ENCODE measurements at regions of chr3 and their contacts with region 1.

Region 1: DNA sequence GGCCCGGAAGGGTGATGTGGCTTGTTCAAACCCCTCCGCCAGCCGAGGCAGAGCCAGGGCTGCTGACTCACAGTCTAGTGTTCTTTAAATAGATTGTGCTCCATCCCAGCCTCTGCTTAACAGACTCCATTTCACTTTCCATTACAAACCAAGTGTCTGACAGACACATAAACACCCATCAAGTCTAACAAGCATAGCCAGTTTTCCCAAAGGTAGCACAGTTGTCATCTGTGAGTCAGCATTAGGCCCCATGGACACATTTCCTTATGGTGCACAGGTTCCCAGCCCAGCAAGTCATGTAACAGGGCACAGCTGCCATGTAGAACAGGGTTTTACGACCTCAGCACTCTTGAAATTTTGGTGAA is 109.9 kb upstream of the RAP2B start:
- DNase-seq: peak; percentile 86
- H3K4me3 Mint-ChIP-seq: peak overlapping the region; percentile 63
- H3K27ac Mint-ChIP-seq: peak overlapping the region; percentile 100
- H3K4me1 Mint-ChIP-seq: peaks cover 49% of the 10 kb centered on the region
- H3K27me3 Mint-ChIP-seq: no peaks in the 10 kb centered on the region
- CTCF ChIP-seq: no peak

Region 2: GRCh38 chr3:153090973-153091372 is 38.9 kb after region 1 on chr3:
- CTCF ChIA-PET with region 1: no interaction called
- intact Hi-C with region 1: loop called (anchors 2 kb)
- DNase-seq: no peak
- H3K4me3 Mint-ChIP-seq: peak overlapping the region; percentile 7
- H3K27ac Mint-ChIP-seq: peak overlapping the region; percentile 66
- H3K4me1 Mint-ChIP-seq: peaks cover 67% of the 10 kb centered on the region
- H3K27me3 Mint-ChIP-seq: no peaks in the 10 kb centered on the region
- CTCF ChIP-seq: no peak

Region 3: DNA sequence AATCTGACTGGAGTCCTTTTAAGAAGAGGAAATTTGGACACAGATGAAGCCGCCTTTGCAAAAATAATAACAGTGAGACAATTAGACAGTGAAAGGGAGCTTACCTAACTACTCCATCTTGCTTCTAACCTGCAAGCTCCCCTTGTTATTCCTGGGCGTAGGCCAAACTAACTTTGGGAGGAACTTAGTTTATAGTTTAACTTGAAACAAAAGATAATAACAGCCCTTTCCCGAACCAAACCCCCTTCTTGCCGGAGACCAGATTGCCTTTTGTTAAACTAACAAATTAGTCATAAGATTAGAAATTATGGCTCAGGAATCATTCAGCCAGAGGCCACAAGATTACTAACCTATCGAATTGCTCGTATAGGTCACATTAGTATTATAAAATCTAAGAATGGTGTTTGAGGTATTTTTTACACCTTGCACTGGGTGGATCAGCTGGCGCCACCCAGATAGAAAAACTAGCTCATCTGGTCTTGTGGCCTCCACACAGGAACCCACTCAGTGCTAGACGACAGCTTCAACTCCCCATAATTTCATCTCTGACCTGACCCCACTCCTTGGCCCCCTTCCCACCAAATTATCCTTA is 44.6 kb after region 1 on chr3:
- CTCF ChIA-PET with region 1: interaction called, 4 read pairs
- intact Hi-C with region 1: loop called (anchors 2 kb)
- DNase-seq: peak; percentile 77
- H3K4me3 Mint-ChIP-seq: peak overlapping the region; percentile 39
- H3K27ac Mint-ChIP-seq: peak overlapping the region; percentile 66
- H3K4me1 Mint-ChIP-seq: peaks cover 71% of the 10 kb centered on the region
- H3K27me3 Mint-ChIP-seq: no peaks in the 10 kb centered on the region
- CTCF ChIP-seq: no peak